ENCODE measurements at regions of chr6 and their contacts with region 1.

Region 1: DNA sequence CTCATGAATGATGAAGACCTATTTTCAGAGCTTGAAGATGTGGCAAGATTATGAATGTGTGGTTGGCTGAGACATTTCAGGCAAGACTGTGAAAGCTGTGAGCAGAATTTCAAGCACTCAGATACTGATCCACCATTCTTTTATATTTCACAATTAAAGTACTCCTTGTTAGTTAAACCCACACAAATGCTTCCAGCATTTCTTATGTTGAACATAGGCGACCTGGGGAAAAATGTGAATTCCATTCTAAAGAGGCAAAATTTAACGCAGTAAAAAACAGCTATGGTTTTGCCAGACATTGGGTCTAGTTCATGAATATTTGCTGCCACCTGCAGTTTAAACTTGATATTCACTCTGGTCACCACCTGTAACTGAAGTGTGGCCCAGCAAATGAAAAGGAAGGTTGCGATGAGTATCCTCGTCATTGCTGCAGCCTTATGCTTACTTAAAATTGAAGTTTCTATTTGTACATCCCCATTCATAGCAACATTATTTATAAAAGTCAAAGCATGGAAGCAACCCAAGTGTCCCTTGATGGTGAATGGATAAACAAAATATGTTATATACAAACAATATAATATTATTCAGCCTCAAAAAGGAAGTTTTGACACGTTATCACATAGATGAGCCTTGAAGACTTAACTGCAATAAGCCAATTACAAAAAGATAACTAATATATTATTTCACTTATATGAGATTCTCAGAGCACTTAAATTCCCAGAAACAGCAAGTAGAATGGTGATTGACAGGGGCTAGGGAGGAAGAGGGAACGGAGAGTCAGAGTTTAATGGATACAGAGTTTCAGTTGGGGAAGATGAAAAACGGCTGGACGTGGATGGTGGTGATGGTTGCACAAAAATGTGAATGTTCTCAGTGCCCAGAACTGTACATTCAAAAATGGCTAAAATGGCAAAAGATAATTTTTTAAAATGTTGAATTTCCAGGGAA is 32.4 kb upstream of the FAM184A start:
- DNase-seq: peak; percentile 35 to 59
- H3K4me3 ChIP-seq: no peak overlapping the region
- H3K27ac ChIP-seq: no peak overlapping the region
- H3K4me1 ChIP-seq: no peaks in the 10 kb centered on the region
- H3K27me3 ChIP-seq: no peaks in the 10 kb centered on the region
- CTCF ChIP-seq: peak; percentile 89

Region 2: DNA sequence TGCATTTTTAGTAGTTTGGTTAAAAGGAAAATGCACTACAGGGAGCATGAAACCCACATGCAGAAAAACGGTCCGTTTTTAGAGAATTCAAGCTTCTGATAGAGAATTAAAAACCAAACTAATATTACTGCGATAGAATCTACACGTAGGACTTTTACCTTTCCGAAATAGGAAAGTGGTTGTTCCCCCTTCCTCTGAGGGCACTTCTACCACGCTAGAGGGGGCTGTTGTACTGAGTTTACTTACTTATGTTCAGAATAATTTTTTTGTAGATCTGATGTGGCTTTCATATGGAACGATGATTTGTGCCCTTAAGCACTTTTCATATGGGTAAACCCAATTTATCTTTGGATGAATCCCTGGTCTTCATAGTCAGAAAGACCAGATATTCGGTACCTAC is 827.1 kb before region 1 on chr6:
- CTCF ChIA-PET with region 1: no interaction called
- POLR2A ChIA-PET with region 1: no interaction called
- intact Hi-C with region 1: loop called (anchors 5 kb)
- DNase-seq: peak; percentile 2 to 66
- H3K4me3 ChIP-seq: no peak overlapping the region
- H3K27ac ChIP-seq: no peak overlapping the region
- H3K4me1 ChIP-seq: no peaks in the 10 kb centered on the region
- H3K27me3 ChIP-seq: no peaks in the 10 kb centered on the region
- CTCF ChIP-seq: peak; percentile 89

Region 3: GRCh38 chr6:118372413-118372812 is 738.5 kb before region 1 on chr6:
- CTCF ChIA-PET with region 1: no interaction called
- POLR2A ChIA-PET with region 1: no interaction called
- intact Hi-C with region 1: no loop called
- DNase-seq: no peak
- H3K4me3 ChIP-seq: no peak overlapping the region
- H3K27ac ChIP-seq: no peak overlapping the region
- H3K4me1 ChIP-seq: no peaks in the 10 kb centered on the region
- H3K27me3 ChIP-seq: no peaks in the 10 kb centered on the region
- CTCF ChIP-seq: no peak

Region 4: DNA sequence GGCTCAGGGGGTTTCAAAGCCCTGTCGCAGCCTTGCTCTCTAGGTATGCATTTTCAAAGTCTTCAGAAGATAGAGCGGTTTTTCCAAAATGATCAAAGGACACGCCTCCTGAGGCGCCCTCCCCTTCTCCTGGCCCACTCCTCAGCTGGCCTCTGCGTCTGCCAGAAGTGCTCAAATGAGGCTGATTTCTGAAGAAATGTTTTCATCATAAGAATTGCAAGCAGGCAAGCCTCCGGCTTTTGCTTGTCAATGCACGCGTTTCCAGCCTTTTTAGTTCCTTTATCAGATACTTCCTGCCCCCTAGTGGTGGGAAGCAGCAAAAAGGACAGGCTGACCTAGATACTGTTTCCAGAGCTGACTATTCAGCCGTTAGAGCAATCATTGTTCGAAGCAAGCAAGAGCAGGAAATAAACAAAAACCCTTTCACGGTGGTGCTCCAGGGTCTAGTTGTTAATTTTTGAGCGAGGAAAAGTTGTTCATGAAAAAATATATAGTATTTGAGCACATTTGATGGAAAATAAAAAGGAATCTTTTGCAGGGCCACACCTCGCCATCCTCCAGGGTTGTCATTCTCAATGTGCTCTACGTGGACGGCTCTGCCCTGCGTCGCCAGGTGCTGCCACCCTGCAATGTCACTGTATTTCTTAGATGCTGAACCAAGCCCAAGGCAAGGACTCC is 310.3 kb before region 1 on chr6:
- CTCF ChIA-PET with region 1: no interaction called
- POLR2A ChIA-PET with region 1: no interaction called
- intact Hi-C with region 1: loop called (anchors 10 kb)
- DNase-seq: peak; percentile 60 to 75
- H3K4me3 ChIP-seq: no peak overlapping the region
- H3K27ac ChIP-seq: no peak overlapping the region
- H3K4me1 ChIP-seq: no peaks in the 10 kb centered on the region
- H3K27me3 ChIP-seq: no peaks in the 10 kb centered on the region
- CTCF ChIP-seq: peak; percentile 99

Region 5: GRCh38 chr6:118963003-118963402 is 147.9 kb before region 1 on chr6:
- CTCF ChIA-PET with region 1: interaction called, 7 read pairs
- POLR2A ChIA-PET with region 1: no interaction called
- intact Hi-C with region 1: loop called (anchors 1 kb)
- DNase-seq: no peak
- H3K4me3 ChIP-seq: no peak overlapping the region
- H3K27ac ChIP-seq: no peak overlapping the region
- H3K4me1 ChIP-seq: peaks cover 15% of the 10 kb centered on the region
- H3K27me3 ChIP-seq: no peaks in the 10 kb centered on the region
- CTCF ChIP-seq: peak; percentile 73

Region 6: GRCh38 chr6:119147101-119148053 is 36.5 kb after region 1 on chr6:
- CTCF ChIA-PET with region 1: no interaction called
- POLR2A ChIA-PET with region 1: no interaction called
- intact Hi-C with region 1: no loop called
- DNase-seq: peak; percentile 78 to 99
- H3K4me3 ChIP-seq: no peak overlapping the region
- H3K27ac ChIP-seq: peak overlapping the region; percentile 75
- H3K4me1 ChIP-seq: peaks cover 43% of the 10 kb centered on the region
- H3K27me3 ChIP-seq: no peaks in the 10 kb centered on the region
- CTCF ChIP-seq: no peak

Region 7: GRCh38 chr6:119890470-119890869 is 779.6 kb after region 1 on chr6:
- CTCF ChIA-PET with region 1: no interaction called
- POLR2A ChIA-PET with region 1: no interaction called
- intact Hi-C with region 1: no loop called
- DNase-seq: no peak
- H3K4me3 ChIP-seq: no peak overlapping the region
- H3K27ac ChIP-seq: no peak overlapping the region
- H3K4me1 ChIP-seq: peaks cover 6% of the 10 kb centered on the region; the same call in 1 of the 2 replicates
- H3K27me3 ChIP-seq: no peaks in the 10 kb centered on the region
- CTCF ChIP-seq: no peak